ENCODE measurements at regions of chr5 and their contacts with region 1.

Region 1: GRCh38 chr5:171258737-171259415 is 50.2 kb upstream of the TLX3 start:
- DNase-seq: no peak
- ATAC-seq: no peak
- H3K4me3 ChIP-seq: no peak overlapping the region
- H3K27ac ChIP-seq: no peak overlapping the region
- H3K4me1 ChIP-seq: no peaks in the 10 kb centered on the region
- H3K27me3 ChIP-seq: no peaks in the 10 kb centered on the region
- CTCF ChIP-seq: no peak

Region 2: DNA sequence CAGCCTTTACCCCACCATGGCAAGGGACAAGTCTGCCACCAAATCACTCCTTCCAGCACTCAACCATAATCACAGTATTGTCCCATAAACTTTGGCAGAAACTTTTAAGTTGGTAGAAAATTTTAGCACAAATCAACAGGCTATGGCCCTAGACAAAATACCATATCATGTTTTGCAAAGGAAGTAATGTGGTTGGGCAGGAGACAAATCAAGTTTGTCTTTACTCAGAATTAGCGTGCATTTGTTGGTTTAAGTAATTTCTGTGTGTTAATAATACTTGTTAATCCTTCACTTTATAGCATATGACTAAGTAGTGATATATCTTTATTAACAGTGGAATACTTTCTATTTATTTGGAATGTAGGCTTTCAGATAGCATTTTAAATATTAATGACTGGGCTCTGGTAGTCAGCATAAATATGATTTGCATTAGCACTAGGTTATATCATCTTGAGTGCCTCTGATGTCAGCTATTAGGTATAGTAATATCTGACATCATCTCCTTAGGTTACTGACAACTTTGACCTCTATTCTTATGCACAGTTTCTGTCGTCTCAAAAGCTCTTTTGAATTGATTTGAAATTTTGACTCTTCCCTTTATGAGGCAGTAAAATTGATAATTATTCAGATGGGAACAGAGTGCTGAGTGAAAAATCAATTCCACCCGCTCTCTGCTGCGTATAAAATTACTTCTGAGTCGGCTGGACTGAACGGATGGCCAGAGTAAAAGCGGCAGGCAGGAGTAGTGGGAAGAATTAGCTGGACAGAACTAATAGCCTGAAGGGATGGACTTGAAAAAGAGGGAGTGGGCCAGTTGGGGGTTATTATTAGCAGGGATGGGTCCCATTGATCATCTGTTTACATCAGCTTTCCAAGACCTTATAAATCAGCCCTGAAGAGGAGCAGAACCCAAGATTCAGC is 10.1 kb after region 1 on chr5:
- intact Hi-C with region 1: loop called in 1 of 10 experiments (anchors 1 kb)
- DNase-seq: no peak
- ATAC-seq: no peak
- H3K4me3 ChIP-seq: no peak overlapping the region
- H3K27ac ChIP-seq: no peak overlapping the region
- H3K4me1 ChIP-seq: no peaks in the 10 kb centered on the region
- H3K27me3 ChIP-seq: no peaks in the 10 kb centered on the region
- CTCF ChIP-seq: no peak

Measured in heart right ventricle (tissue), 16 donors.